ENCODE measurements at regions of chr6 and their contacts with region 1.

Region 1: GRCh38 chr6:127484212-127484858 is 25.1 kb upstream of the KIAA0408 start:
- DNase-seq: no peak
- ATAC-seq: peak; percentile 97
- H3K4me3 Mint-ChIP-seq: peak overlapping the region; percentile 54
- H3K27ac Mint-ChIP-seq: peak overlapping the region; percentile 88
- H3K4me1 Mint-ChIP-seq: peaks cover 37% of the 10 kb centered on the region
- H3K27me3 Mint-ChIP-seq: no peaks in the 10 kb centered on the region

Region 2: DNA sequence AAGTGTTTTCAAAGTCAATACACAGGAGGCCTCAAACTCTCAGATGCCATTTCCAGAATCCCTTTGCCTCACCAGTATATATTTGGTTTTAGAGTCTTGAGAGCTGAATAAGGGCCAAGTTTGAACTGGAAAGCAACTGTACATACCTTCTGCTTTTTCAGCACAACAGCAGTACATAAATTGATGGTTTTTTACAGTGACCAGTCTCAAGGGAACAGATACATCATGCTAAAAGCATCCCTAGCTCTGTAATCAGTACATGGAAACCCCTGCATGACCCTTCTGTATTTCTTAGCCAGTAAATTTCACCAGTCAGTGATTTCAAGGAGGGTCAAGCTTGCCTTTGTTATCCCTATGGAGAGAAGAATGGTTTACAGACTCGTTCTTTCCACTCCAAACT is 100.3 kb before region 1 on chr6:
- POLR2A ChIA-PET with region 1: no interaction called
- DNase-seq: no peak
- ATAC-seq: no peak
- H3K4me3 Mint-ChIP-seq: no peak overlapping the region
- H3K27ac Mint-ChIP-seq: no peak overlapping the region
- H3K4me1 Mint-ChIP-seq: no peaks in the 10 kb centered on the region
- H3K27me3 Mint-ChIP-seq: peaks cover 3% of the 10 kb centered on the region

Region 3: DNA sequence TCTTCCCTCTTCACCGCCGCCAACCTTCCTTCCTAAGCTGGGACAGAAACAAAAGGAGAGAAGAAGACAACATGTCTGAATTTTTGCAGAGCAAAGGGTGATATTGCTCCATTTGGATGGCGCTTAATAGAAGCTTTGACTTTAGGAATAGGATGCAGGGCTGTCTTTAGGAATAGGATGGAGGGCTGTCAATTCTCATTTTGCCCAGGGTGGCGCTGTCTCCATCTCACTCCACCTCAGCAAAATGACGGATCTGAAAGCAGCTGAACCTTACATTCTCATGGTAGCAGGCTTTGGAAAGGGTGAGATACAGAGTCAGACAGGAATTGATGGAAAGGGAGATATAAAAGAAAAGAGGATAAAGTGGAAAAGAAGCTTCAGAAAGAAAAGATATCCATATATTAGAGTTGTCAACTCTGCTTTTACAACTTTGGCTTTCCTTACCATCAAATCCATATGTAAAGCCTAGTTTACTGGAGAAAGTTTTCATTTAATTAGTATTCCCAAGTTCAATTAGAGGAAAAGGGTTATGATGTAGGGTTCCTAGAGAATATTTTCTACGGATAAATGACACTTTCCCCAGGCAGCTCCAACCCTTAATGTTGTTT is 32.4 kb after region 1 on chr6:
- POLR2A ChIA-PET with region 1: interaction called, 19 read pairs
- DNase-seq: no peak
- ATAC-seq: peak; percentile 44
- H3K4me3 Mint-ChIP-seq: peak overlapping the region; percentile 95
- H3K27ac Mint-ChIP-seq: peak overlapping the region; percentile 73
- H3K4me1 Mint-ChIP-seq: peaks cover 29% of the 10 kb centered on the region
- H3K27me3 Mint-ChIP-seq: peaks cover 27% of the 10 kb centered on the region

Measured in activated naive CD8-positive, alpha-beta T cell treated with anti-CD3 and anti-CD28 coated beads, Interleukin-2, amount 10 ng/mL, durations not matched to agents 7 days and 5 days (primary cell).